CD8-positive, alpha-beta T cell (primary cell): ENCODE measurements at regions of chr2 and their contacts with region 1.

Region 1: GRCh38 chr2:237026981-237027711 is 58.5 kb upstream of the COPS8 start:
- DNase-seq: peak; percentile 16 to 57 (median 46)
- ATAC-seq: peak; percentile 49
- H3K4me3 ChIP-seq: no peak overlapping the region
- H3K4me3 Mint-ChIP-seq: no peak overlapping the region
- H3K27ac ChIP-seq: no peak overlapping the region
- H3K27ac Mint-ChIP-seq: no peak overlapping the region
- H3K4me1 ChIP-seq: no peaks in the 10 kb centered on the region
- H3K4me1 Mint-ChIP-seq: no peaks in the 10 kb centered on the region
- H3K27me3 ChIP-seq: no peaks in the 10 kb centered on the region
- H3K27me3 Mint-ChIP-seq: no peaks in the 10 kb centered on the region
- CTCF ChIP-seq: peak; percentile 59

Region 2: GRCh38 chr2:236343400-236344161 is 683.6 kb before region 1 on chr2:
- CTCF ChIA-PET with region 1: interaction called, 11 read pairs
- POLR2A ChIA-PET with region 1: no interaction called
- intact Hi-C with region 1: no loop called
- DNase-seq: peak in 8 of 9 experiments; percentile 27 to 73 (median 47)
- ATAC-seq: peak; percentile 57
- H3K4me3 ChIP-seq: no peak overlapping the region
- H3K4me3 Mint-ChIP-seq: no peak overlapping the region
- H3K27ac ChIP-seq: no peak overlapping the region
- H3K27ac Mint-ChIP-seq: no peak overlapping the region
- H3K4me1 ChIP-seq: no peaks in the 10 kb centered on the region
- H3K4me1 Mint-ChIP-seq: no peaks in the 10 kb centered on the region
- H3K27me3 ChIP-seq: no peaks in the 10 kb centered on the region
- H3K27me3 Mint-ChIP-seq: peaks cover 5% of the 10 kb centered on the region
- CTCF ChIP-seq: peak; percentile 86

Region 3: GRCh38 chr2:236352761-236353593 is 674.2 kb before region 1 on chr2:
- CTCF ChIA-PET with region 1: interaction called, 16 read pairs
- POLR2A ChIA-PET with region 1: no interaction called
- intact Hi-C with region 1: loop called in 1 of 2 experiments (anchors 1 kb)
- DNase-seq: peak in 6 of 9 experiments; percentile 17 to 64 (median 40)
- ATAC-seq: peak; percentile 62
- H3K4me3 ChIP-seq: no peak overlapping the region
- H3K4me3 Mint-ChIP-seq: no peak overlapping the region
- H3K27ac ChIP-seq: no peak overlapping the region
- H3K27ac Mint-ChIP-seq: no peak overlapping the region
- H3K4me1 ChIP-seq: no peaks in the 10 kb centered on the region
- H3K4me1 Mint-ChIP-seq: peaks cover 2% of the 10 kb centered on the region
- H3K27me3 ChIP-seq: no peaks in the 10 kb centered on the region
- H3K27me3 Mint-ChIP-seq: peaks cover 11% of the 10 kb centered on the region
- CTCF ChIP-seq: peak; percentile 96

Region 4: GRCh38 chr2:236904389-236905280 is 122.5 kb before region 1 on chr2:
- CTCF ChIA-PET with region 1: interaction called, 3 read pairs
- POLR2A ChIA-PET with region 1: no interaction called
- intact Hi-C with region 1: loop called in 1 of 2 experiments (anchors 10 kb)
- DNase-seq: no peak
- ATAC-seq: no peak
- H3K4me3 ChIP-seq: no peak overlapping the region
- H3K4me3 Mint-ChIP-seq: no peak overlapping the region
- H3K27ac ChIP-seq: no peak overlapping the region
- H3K27ac Mint-ChIP-seq: no peak overlapping the region
- H3K4me1 ChIP-seq: no peaks in the 10 kb centered on the region
- H3K4me1 Mint-ChIP-seq: no peaks in the 10 kb centered on the region
- H3K27me3 ChIP-seq: no peaks in the 10 kb centered on the region
- H3K27me3 Mint-ChIP-seq: peaks cover 20% of the 10 kb centered on the region
- CTCF ChIP-seq: no peak

Region 5: GRCh38 chr2:237045432-237045831 is 18.3 kb after region 1 on chr2:
- CTCF ChIA-PET with region 1: no interaction called
- POLR2A ChIA-PET with region 1: no interaction called
- intact Hi-C with region 1: no loop called
- DNase-seq: no peak
- ATAC-seq: no peak
- H3K4me3 ChIP-seq: no peak overlapping the region
- H3K4me3 Mint-ChIP-seq: no peak overlapping the region
- H3K27ac ChIP-seq: no peak overlapping the region
- H3K27ac Mint-ChIP-seq: no peak overlapping the region
- H3K4me1 ChIP-seq: no peaks in the 10 kb centered on the region
- H3K4me1 Mint-ChIP-seq: no peaks in the 10 kb centered on the region
- H3K27me3 ChIP-seq: no peaks in the 10 kb centered on the region
- H3K27me3 Mint-ChIP-seq: peaks cover 2% of the 10 kb centered on the region
- CTCF ChIP-seq: no peak